Activated CD8-positive, alpha-beta memory T cell treated with anti-CD3 and anti-CD28 coated beads, Interleukin-2, amount 10 ng/mL, durations not matched to agents 7 days and 5 days (primary cell): ENCODE measurements at regions of chr12 and their contacts with region 1.

Region 1: DNA sequence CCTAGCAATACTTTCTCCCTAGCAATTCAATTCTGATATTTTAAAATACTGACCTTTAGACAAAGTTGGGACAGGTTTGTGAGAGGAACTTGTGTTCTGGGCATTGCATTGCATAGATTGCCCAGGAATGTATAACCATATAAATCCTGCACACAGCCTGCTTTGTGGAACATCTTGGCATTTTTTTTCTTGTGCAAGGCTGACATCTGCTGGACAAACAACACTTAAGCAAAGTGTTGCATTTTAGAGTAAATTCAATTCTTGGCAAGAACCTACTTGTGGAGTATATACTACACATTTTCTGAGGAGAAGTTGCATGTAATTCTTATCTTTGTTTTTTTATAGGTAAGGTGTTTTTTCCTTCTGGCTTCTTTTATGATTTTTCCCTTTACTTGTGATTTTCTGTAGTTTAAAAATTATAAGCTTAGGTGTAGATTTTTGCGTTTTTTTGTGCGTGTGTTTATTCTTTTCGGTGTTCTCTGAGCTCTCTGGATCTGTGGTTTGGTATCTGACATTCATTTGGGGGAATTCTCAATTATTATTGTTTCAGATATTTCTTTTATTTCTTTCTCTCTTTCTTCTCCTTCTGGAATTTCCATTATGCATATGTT is 26.4 kb downstream of the TESPA1 start:
- DNase-seq: peak; percentile 61
- ATAC-seq: peak; percentile 49
- H3K4me3 Mint-ChIP-seq: no peak overlapping the region
- H3K27ac Mint-ChIP-seq: no peak overlapping the region
- H3K4me1 Mint-ChIP-seq: peaks cover 44% of the 10 kb centered on the region
- H3K27me3 Mint-ChIP-seq: no peaks in the 10 kb centered on the region

Region 2: GRCh38 chr12:54853995-54854566 is 104.1 kb before region 1 on chr12 and contains the start of gene MUCL1:
- CTCF ChIA-PET with region 1: interaction called, 33 read pairs
- DNase-seq: peak; percentile 84
- ATAC-seq: peak; percentile 100
- H3K4me3 Mint-ChIP-seq: no peak within 1 kb of the TSS
- H3K27ac Mint-ChIP-seq: no peak within 1 kb of the TSS
- H3K4me1 Mint-ChIP-seq: peaks cover 6% of the 10 kb centered on the region
- H3K27me3 Mint-ChIP-seq: no peaks in the 10 kb centered on the region
- total RNA-seq, gene MUCL1: not detected

Region 3: DNA sequence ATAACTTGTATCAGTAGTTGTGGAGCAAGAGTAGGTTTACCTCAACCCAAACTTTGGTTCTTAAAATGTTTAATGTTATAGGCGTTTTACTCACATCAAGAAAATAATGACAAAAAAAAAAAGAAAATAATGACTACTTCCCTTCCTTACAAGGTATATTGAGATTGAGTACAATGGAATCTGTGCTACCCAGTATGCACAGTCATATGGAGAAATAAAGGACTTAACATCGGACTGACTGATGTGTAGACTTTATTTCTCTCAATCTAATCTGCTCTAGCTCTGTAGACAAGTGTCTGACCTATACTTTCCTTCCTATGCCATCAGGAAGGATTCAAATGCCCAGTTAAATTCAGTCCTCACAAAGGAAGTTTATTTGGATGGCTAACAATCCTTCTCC is 89.5 kb before region 1 on chr12:
- CTCF ChIA-PET with region 1: no interaction called
- DNase-seq: no peak
- ATAC-seq: no peak
- H3K4me3 Mint-ChIP-seq: no peak overlapping the region
- H3K27ac Mint-ChIP-seq: no peak overlapping the region
- H3K4me1 Mint-ChIP-seq: peaks cover 2% of the 10 kb centered on the region
- H3K27me3 Mint-ChIP-seq: peaks cover 44% of the 10 kb centered on the region

Region 4: GRCh38 chr12:54935235-54935951 is 22.8 kb before region 1 on chr12:
- CTCF ChIA-PET with region 1: interaction called, 18 read pairs
- DNase-seq: peak; percentile 63
- ATAC-seq: peak; percentile 98
- H3K4me3 Mint-ChIP-seq: peak overlapping the region; percentile 48
- H3K27ac Mint-ChIP-seq: peak overlapping the region; percentile 99
- H3K4me1 Mint-ChIP-seq: peaks cover 41% of the 10 kb centered on the region
- H3K27me3 Mint-ChIP-seq: no peaks in the 10 kb centered on the region